Thyroid gland (tissue), 4 donors: ENCODE measurements at regions of chr18 and their contacts with region 1.

Region 1: GRCh38 chr18:36058674-36059073 is 8.7 kb downstream of the RPRD1A start:
- DNase-seq: no peak
- H3K4me3 ChIP-seq: no peak overlapping the region
- H3K27ac ChIP-seq: no peak overlapping the region
- H3K4me1 ChIP-seq: peaks cover 3 to 5% of the 10 kb centered on the region in 2 donors
- H3K27me3 ChIP-seq: no peaks in the 10 kb centered on the region
- CTCF ChIP-seq: no peak
- POLR2A ChIP-seq: no peak

Region 2: DNA sequence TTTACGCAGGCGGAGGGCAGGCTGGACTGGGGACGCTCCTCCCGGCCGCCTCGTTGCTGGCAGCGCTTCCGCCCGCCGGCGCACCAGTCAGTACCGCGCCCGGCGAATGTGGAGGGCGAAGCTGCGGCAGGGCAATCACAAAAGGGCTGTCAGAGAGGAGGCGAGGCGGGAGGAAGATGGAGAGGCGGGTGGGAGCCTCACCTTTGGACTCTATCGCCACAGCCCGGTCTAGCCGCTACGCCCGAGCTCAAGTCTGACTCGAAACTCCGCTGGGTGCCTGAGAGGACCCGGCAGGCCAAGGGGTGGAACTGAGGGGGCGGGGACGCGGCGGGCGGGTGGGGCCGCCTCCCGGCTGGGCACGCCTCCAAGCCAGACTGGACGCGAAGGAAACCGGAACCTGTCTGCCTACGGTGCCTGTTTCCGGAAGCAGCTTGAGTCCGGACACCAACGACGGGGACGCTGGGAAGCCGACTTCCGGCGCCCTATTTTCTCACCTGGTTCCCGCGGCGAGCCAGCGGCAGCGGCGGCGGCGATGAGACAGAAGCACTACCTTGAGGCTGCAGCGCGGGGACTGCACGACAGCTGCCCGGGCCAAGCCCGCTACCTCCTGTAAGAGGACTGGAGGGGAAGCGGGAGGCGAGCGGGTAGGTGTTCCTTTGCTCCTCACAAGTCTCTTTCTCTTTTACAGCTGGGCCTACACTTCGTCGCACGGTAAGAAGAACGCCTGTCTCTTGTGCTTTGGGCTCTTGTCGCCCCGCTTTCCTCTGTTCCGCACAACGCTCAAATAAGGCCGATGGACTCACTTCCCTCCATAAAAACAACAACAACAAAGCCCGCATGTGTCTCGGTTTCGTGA is 86.2 kb before region 1 on chr18 and contains the start of gene RMP24:
- intact Hi-C with region 1: loop called (anchors 10 kb)
- DNase-seq: peak; percentile 95
- H3K4me3 ChIP-seq: peak within 1 kb of the TSS; percentile 59 to 96 (median 82)
- H3K27ac ChIP-seq: peak within 1 kb of the TSS; percentile 79 to 86 (median 81)
- H3K4me1 ChIP-seq: peaks cover 12 to 19% of the 10 kb centered on the region in 2 donors
- H3K27me3 ChIP-seq: no peaks in the 10 kb centered on the region
- CTCF ChIP-seq: no peak
- POLR2A ChIP-seq: peak in 1 of 2 donors; percentile 82

Region 3: DNA sequence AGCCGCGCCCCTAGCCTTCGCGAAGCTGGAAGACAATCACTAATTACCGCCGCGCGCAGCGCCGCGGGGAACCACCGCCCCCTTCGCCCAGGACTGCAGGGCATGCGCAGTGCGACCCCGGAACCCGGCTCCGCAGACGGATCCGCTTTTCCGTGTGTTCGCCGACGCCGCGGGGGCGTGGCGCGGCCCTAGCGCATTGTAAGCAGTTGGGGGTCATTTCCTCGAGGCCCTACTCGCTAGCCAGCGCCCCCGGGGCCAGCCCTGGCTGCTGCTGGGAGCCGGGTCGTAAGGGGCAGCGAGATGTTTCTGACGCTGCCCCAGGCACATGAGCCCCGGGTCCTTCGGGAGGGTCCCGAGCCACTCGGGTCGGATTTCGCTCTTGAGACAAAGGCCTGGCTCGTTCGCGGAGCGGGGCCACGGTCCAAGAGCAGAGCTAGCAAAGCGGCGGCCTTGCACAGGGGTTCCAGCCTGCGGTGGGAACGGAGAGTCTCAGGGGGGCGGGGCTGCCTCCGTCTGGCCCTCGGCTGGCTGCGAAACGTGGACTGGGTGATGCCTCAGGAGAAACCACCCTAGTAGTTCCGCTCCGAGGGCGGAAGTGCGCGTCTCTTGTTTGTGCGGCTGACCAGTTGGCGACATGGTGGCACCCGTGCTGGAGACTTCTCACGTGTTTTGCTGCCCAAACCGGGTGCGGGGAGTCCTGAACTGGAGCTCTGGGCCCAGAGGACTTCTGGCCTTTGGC is 70.8 kb after region 1 on chr18 and contains the starts of genes ELP2 and SLC39A6:
- intact Hi-C with region 1: no loop called
- DNase-seq: peak; percentile 98
- H3K4me3 ChIP-seq: peak within 1 kb of the TSS; percentile 91 to 99 (median 94)
- H3K27ac ChIP-seq: peak within 1 kb of the TSS; percentile 98 to 100 (median 99)
- H3K4me1 ChIP-seq: peaks cover 12 to 27% of the 10 kb centered on the region in 2 donors
- H3K27me3 ChIP-seq: no peaks in the 10 kb centered on the region
- CTCF ChIP-seq: no peak
- POLR2A ChIP-seq: peak in 1 of 2 donors; percentile 76
- total RNA-seq, gene ELP2: 50.5 to 93.2 (median 61.4) TPM
- total RNA-seq, gene SLC39A6: 42.6 to 52.8 (median 48.1) TPM

Region 4: GRCh38 chr18:36141576-36141975 is 82.9 kb after region 1 on chr18:
- intact Hi-C with region 1: no loop called
- DNase-seq: no peak
- H3K4me3 ChIP-seq: no peak overlapping the region
- H3K27ac ChIP-seq: no peak overlapping the region
- H3K4me1 ChIP-seq: no peaks in the 10 kb centered on the region
- H3K27me3 ChIP-seq: no peaks in the 10 kb centered on the region
- CTCF ChIP-seq: no peak
- POLR2A ChIP-seq: no peak

Region 5: GRCh38 chr18:36402765-36403396 is 344.2 kb after region 1 on chr18:
- intact Hi-C with region 1: no loop called
- DNase-seq: no peak
- H3K4me3 ChIP-seq: no peak overlapping the region
- H3K27ac ChIP-seq: no peak overlapping the region
- H3K4me1 ChIP-seq: no peaks in the 10 kb centered on the region
- H3K27me3 ChIP-seq: no peaks in the 10 kb centered on the region
- CTCF ChIP-seq: no peak
- POLR2A ChIP-seq: no peak